Activated CD4-positive, alpha-beta T cell treated with anti-CD3 and anti-CD28 coated beads for 36 hours (primary cell): ENCODE measurements at regions of chr6 and their contacts with region 1.

Region 1: GRCh38 chr6:2765166-2765895 is at the start of gene WRNIP1:
- DNase-seq: peak; percentile 98
- ATAC-seq: peak; percentile 90
- H3K4me3 Mint-ChIP-seq: peak within 1 kb of the TSS; percentile 94
- H3K27ac Mint-ChIP-seq: peak within 1 kb of the TSS; percentile 98
- H3K4me1 Mint-ChIP-seq: peaks cover 51% of the 10 kb centered on the region
- H3K27me3 Mint-ChIP-seq: no peaks in the 10 kb centered on the region
- total RNA-seq, gene WRNIP1: 41.6 to 42.3 TPM

Region 2: DNA sequence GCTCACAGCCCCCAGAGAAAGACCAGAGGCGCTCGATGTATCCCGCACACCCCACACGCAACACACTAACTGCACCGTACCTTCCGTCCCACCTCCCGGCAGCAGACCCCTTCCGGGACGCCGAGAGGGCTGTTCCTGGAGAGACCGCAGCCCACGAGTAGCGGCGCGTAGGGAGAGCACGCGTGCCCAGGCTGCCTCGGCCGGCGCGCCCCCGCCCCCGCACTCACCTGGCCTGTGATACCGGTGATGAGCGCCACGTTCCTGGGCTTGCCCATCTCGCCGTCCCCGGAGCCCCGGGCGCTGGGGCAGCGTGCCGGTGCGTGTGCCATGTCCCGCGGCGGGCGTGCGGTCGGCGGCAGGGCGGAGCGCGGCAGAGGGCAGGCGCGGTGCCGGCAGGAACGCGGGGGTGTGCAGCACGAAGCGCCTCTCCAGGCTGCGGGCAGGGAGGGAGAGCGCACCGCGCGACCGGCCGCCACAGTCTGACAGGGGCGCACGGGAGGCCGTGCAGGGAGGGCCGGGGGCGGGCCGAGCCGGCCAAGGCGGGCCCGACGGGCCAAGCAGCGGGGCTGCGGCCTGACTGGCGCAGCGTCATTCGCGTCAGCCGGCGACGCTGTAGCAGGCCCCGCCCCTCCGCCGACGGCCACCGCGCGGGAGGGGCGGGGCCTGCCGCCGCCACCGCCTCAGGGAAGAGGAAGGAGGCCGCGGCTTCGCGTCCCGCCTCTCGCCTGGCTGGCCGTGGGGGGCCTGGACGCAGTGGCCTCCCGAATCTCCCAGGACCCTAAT is 520.0 kb before region 1 on chr6 and contains the start of gene GMDS:
- CTCF ChIA-PET with region 1: no interaction called
- POLR2A ChIA-PET with region 1: no interaction called
- intact Hi-C with region 1: loop called (anchors 1 to 5 kb)
- DNase-seq: peak; percentile 89
- ATAC-seq: peak; percentile 94
- H3K4me3 Mint-ChIP-seq: peak within 1 kb of the TSS; percentile 91
- H3K27ac Mint-ChIP-seq: peak within 1 kb of the TSS; percentile 97
- H3K4me1 Mint-ChIP-seq: peaks cover 56% of the 10 kb centered on the region
- H3K27me3 Mint-ChIP-seq: no peaks in the 10 kb centered on the region
- total RNA-seq, gene GMDS: 33.2 to 33.5 TPM

Region 3: DNA sequence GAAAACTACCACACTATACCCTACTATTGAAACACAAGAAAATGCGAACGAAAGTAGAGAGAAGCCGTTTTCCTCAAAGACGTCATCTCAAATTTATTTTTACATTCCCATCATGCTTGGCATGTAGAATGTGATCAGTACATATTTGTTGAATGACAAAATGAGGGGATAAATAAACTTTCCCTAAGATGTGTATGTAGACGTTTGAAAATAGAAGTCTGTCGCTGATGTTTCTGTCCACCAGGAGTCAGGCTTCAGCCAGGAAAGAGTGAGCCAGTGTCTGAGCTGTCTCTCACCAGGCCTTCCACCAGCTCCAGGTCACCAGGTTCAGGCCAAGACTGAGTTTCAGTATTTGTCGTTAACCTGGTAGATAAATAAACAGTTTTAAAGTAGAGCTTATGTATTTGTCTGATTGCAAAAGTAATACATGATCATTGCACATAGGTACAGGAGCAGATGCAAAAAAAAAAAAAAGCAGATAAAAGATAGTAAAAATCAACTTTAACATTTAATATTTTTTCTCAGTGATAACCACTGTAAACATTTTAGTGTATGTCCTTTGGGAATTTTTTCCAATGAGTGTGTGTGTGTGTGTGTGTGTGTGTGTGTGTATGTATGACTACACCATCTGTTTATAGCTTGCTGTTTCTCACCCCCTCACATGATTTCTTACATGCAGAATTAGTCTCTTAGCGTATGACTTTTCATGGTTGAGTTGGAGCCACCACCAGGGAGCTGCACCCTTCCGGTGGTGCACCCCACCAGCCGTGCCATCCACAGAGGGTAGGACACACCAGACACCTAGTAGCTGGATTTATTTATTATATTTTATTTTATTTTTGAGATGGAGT is 26.0 kb after region 1 on chr6:
- CTCF ChIA-PET with region 1: interaction called, 33 read pairs
- POLR2A ChIA-PET with region 1: interaction called, 3 read pairs
- intact Hi-C with region 1: loop called in 1 of 2 experiments (anchors 2 kb)
- DNase-seq: peak; percentile 83
- ATAC-seq: peak; percentile 76
- H3K4me3 Mint-ChIP-seq: no peak overlapping the region
- H3K27ac Mint-ChIP-seq: peak overlapping the region; percentile 71
- H3K4me1 Mint-ChIP-seq: peaks cover 44% of the 10 kb centered on the region
- H3K27me3 Mint-ChIP-seq: no peaks in the 10 kb centered on the region

Region 4: DNA sequence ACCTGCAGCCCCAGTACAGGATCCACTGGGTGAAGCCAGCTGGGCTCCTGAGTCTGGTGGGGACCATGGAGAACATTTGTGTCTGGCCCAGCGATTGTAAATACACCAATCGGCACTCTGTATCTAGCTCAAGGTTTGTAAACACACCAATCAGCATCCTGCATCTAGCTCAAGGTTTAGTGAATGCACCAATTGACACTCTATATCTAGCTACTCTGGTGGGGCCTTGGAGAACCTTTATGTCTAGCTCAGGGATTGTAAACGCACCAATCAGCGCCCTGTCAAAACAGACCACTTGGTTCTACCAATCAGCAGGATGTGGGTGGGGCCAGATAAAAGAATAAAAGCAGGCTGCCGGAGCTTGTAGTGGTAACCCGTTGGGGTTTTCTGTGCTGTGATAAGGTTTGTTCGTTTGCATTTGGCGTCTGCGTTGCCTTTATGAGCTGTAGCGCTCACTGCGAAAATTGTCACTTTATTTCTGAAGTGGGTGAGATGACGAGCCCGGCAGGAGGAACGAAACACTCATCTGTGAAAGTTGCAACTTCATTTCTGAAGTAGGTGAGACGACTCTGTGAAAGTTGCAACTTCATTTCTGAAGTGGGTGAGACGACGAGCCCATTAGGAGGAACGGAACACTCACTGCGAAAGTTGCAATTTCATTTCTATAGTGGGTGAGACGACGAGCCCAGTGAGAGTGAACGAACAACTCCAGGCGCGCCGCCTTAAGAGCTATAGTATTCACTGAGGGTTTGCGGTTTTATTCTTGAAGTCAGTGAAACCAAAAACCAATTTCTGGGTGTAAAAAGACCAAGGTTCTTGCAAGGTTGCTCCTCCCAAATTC is 174.9 kb after region 1 on chr6:
- CTCF ChIA-PET with region 1: no interaction called
- POLR2A ChIA-PET with region 1: interaction called, 7 read pairs
- intact Hi-C with region 1: loop called in 1 of 2 experiments (anchors 1 kb)
- DNase-seq: peak; percentile 92
- ATAC-seq: peak; percentile 84
- H3K4me3 Mint-ChIP-seq: peak overlapping the region; percentile 50
- H3K27ac Mint-ChIP-seq: peak overlapping the region; percentile 94
- H3K4me1 Mint-ChIP-seq: peaks cover 67% of the 10 kb centered on the region
- H3K27me3 Mint-ChIP-seq: no peaks in the 10 kb centered on the region

Region 5: DNA sequence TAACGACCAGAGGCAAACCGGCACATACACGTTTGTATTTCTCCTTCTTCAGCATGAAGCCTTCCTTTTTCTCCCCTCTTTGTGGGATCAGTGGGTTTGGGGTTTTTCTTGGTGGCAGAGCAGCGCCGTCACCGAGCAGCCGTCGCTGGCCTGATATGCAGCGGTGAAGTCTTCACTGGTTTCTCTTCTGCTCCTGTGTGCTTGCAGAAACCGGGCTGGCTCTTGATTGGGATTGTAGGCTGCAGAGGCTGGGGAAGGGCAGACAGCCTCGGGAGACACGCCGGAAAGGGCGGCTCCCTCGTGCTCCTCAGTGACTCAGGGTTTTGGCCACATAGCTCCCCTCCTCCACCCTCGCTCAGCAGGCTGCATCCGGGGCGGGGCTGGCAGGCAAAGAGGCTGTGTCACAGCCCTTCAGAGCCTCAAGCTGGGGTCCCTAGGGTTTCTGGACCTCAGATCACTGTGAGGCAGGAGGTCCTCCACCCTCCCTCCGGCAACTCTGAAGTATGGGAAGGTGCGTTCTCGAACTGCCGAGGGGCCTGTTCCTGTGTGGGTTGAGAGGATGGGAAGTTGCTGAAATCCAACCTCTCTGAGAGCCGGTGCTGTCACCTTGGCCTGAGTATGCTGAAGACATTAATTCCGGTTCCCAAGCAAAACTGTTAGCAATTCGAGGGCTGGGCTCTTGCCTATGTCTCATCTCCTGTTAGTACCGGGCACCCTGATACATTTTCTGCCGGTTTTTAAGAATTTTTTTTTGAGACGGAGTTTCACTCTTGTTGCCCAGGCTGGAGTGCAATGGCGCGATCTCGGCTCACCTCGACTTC is 258.5 kb after region 1 on chr6:
- CTCF ChIA-PET with region 1: interaction called, 3 read pairs
- POLR2A ChIA-PET with region 1: no interaction called
- intact Hi-C with region 1: loop called in 1 of 2 experiments (anchors 1 kb)
- DNase-seq: peak; percentile 95
- ATAC-seq: peak; percentile 86
- H3K4me3 Mint-ChIP-seq: peak overlapping the region; percentile 78
- H3K27ac Mint-ChIP-seq: peak overlapping the region; percentile 95
- H3K4me1 Mint-ChIP-seq: peaks cover 62% of the 10 kb centered on the region
- H3K27me3 Mint-ChIP-seq: no peaks in the 10 kb centered on the region

Region 6: GRCh38 chr6:3258720-3259490 is 493.6 kb after region 1 on chr6 and contains the start of gene PSMG4:
- CTCF ChIA-PET with region 1: interaction called, 3 read pairs
- POLR2A ChIA-PET with region 1: no interaction called
- intact Hi-C with region 1: loop called in 1 of 2 experiments (anchors 2 kb)
- DNase-seq: peak; percentile 97
- ATAC-seq: peak; percentile 83
- H3K4me3 Mint-ChIP-seq: peak within 1 kb of the TSS; percentile 89
- H3K27ac Mint-ChIP-seq: peak within 1 kb of the TSS; percentile 92
- H3K4me1 Mint-ChIP-seq: peaks cover 35% of the 10 kb centered on the region
- H3K27me3 Mint-ChIP-seq: peaks cover 3% of the 10 kb centered on the region
- total RNA-seq, gene PSMG4: 22.2 to 23.2 TPM